HEK293 (cell line): ENCODE measurements at regions of chr3 and their contacts with region 1.

Region 1: GRCh38 chr3:107870943-107871638 is 219.7 kb downstream of the CD47 start:
- H3K4me3 ChIP-seq: no peak overlapping the region
- H3K27ac ChIP-seq: no peak overlapping the region
- H3K4me1 ChIP-seq: no peaks in the 10 kb centered on the region; the same call in 1 of the 2 replicates
- CTCF ChIP-seq: no peak

Region 2: GRCh38 chr3:107884719-107885460 is 13.8 kb after region 1 on chr3:
- CTCF ChIA-PET with region 1: interaction called, 11 read pairs
- POLR2A ChIA-PET with region 1: no interaction called
- H3K4me3 ChIP-seq: no peak overlapping the region
- H3K27ac ChIP-seq: no peak overlapping the region
- H3K4me1 ChIP-seq: no peaks in the 10 kb centered on the region
- CTCF ChIP-seq: no peak